HepG2 (cell line): ENCODE measurements at regions of chr1 and their contacts with region 1.

Region 1: GRCh38 chr1:59296358-59297256 is at the start of gene FGGY:
- DNase-seq: peak; percentile 96
- ATAC-seq: peak; percentile 95
- H3K4me3 ChIP-seq: peak within 1 kb of the TSS; percentile 59 to 85 (median 82)
- H3K27ac ChIP-seq: peak within 1 kb of the TSS; percentile 93
- H3K4me1 ChIP-seq: peaks cover 53% of the 10 kb centered on the region
- H3K27me3 ChIP-seq: no peaks in the 10 kb centered on the region; a peak in 1 of 5 replicates
- CTCF ChIP-seq: peak; percentile 25
- EP300 ChIP-seq: no peak
- POLR2A ChIP-seq: peak; percentile 77 to 84
- RAD21 ChIP-seq: no peak; the same call in none of the 2 replicates
- total RNA-seq, gene FGGY: 15.7 and 20.0 TPM in 2 replicates

Region 2: DNA sequence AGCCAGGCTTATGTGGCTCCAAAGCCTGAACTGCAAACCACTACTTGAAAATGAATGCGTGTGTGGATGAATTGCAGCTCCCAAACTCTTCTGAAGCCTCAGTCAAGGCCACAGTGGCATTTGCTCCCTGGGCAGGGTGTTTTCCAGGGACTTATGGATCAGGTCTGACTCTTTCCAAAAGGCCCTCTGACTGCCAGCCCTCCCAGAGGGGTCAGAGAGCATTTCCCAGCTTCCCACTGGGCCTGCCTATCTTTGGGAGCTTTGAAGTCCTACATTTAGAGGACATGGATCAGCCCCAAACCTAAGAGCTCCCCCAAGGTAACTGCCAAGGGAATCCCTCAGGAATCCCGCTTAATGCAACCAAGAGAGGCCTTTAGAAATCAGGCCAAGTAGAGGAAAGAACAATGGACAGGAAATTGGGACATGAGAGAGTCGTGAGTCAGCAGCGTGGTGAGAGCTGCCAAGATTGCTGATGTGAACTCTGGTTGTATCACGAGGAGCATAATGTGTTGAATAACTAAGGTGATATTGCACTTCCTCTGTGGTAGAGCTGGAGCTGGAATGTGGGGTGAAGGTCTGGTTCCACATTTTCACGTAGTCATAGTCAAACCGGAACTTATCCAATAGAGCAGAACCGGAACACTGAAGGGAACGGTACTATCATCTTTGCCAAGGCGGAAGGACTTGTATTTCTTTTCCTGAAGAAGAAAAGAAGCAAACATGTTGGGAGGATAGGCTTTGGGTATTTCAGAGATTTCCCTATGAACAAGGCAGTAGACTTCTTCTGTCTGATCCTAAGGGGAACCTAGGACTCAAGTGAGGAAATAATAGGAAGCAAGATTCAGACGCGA is 413.3 kb before region 1 on chr1:
- CTCF ChIA-PET with region 1: no interaction called
- POLR2A ChIA-PET with region 1: interaction called, 5 read pairs
- in situ Hi-C with region 1: no loop called
- intact Hi-C with region 1: loop called (anchors 10 kb)
- DNase-seq: peak; percentile 93
- ATAC-seq: peak; percentile 50
- H3K4me3 ChIP-seq: 0 out of 6 replicates have a peak overlapping the region, but pooled peaks of 1 of the 3 experiments have one; percentile 18
- H3K27ac ChIP-seq: peak overlapping the region; percentile 77
- H3K4me1 ChIP-seq: peaks cover 76% of the 10 kb centered on the region
- H3K27me3 ChIP-seq: no peaks in the 10 kb centered on the region
- CTCF ChIP-seq: no peak
- EP300 ChIP-seq: peak in 1 of 2 experiments; percentile 78; a peak in 2 of 4 replicates
- POLR2A ChIP-seq: peak in 1 of 2 experiments; percentile 51; a peak in 2 of 4 replicates
- RAD21 ChIP-seq: peak; percentile 31; the same call in 1 of the 2 replicates

Region 3: GRCh38 chr1:59146651-59147358 is 149.8 kb before region 1 on chr1:
- CTCF ChIA-PET with region 1: no interaction called
- POLR2A ChIA-PET with region 1: interaction called, 3 read pairs
- in situ Hi-C with region 1: no loop called
- intact Hi-C with region 1: loop called (anchors 10 kb)
- DNase-seq: peak; percentile 3
- ATAC-seq: peak; percentile 87
- H3K4me3 ChIP-seq: peak overlapping the region; percentile 53 to 75 (median 58)
- H3K27ac ChIP-seq: no peak overlapping the region
- H3K4me1 ChIP-seq: peaks cover 44% of the 10 kb centered on the region
- H3K27me3 ChIP-seq: peaks cover 1 to 22% of the 10 kb centered on the region in 2 experiments; a peak in 3 of 5 replicates
- CTCF ChIP-seq: peak; percentile 59
- EP300 ChIP-seq: no peak
- POLR2A ChIP-seq: no peak
- RAD21 ChIP-seq: peak; percentile 67

Region 4: GRCh38 chr1:59307591-59307990 is 11.0 kb after region 1 on chr1:
- CTCF ChIA-PET with region 1: no interaction called
- POLR2A ChIA-PET with region 1: interaction called, 14 read pairs
- in situ Hi-C with region 1: no loop called
- intact Hi-C with region 1: no loop called
- DNase-seq: no peak
- ATAC-seq: no peak
- H3K4me3 ChIP-seq: no peak overlapping the region
- H3K27ac ChIP-seq: no peak overlapping the region
- H3K4me1 ChIP-seq: peaks cover 15% of the 10 kb centered on the region
- H3K27me3 ChIP-seq: no peaks in the 10 kb centered on the region
- CTCF ChIP-seq: no peak
- EP300 ChIP-seq: no peak
- POLR2A ChIP-seq: no peak
- RAD21 ChIP-seq: no peak

Region 5: GRCh38 chr1:59549903-59550302 is 253.3 kb after region 1 on chr1:
- CTCF ChIA-PET with region 1: no interaction called
- POLR2A ChIA-PET with region 1: interaction called, 4 read pairs
- in situ Hi-C with region 1: loop called (anchors 10 kb)
- intact Hi-C with region 1: no loop called
- DNase-seq: peak; percentile 50
- ATAC-seq: no peak
- H3K4me3 ChIP-seq: no peak overlapping the region
- H3K27ac ChIP-seq: peak overlapping the region; percentile 39
- H3K4me1 ChIP-seq: peaks cover 50% of the 10 kb centered on the region
- H3K27me3 ChIP-seq: no peaks in the 10 kb centered on the region
- CTCF ChIP-seq: no peak
- EP300 ChIP-seq: peak in 1 of 2 experiments; percentile 71; a peak in 2 of 4 replicates
- POLR2A ChIP-seq: no peak
- RAD21 ChIP-seq: no peak

Region 6: GRCh38 chr1:59699227-59699847 is 402.7 kb after region 1 on chr1:
- CTCF ChIA-PET with region 1: interaction called, 4 read pairs
- POLR2A ChIA-PET with region 1: interaction called, 3 read pairs
- in situ Hi-C with region 1: loop called (anchors 10 kb)
- intact Hi-C with region 1: loop called (anchors 2 kb)
- DNase-seq: peak; percentile 48
- ATAC-seq: no peak
- H3K4me3 ChIP-seq: no peak overlapping the region
- H3K27ac ChIP-seq: peak overlapping the region; percentile 44
- H3K4me1 ChIP-seq: peaks cover 37% of the 10 kb centered on the region
- H3K27me3 ChIP-seq: no peaks in the 10 kb centered on the region
- CTCF ChIP-seq: peak; percentile 79
- EP300 ChIP-seq: no peak
- POLR2A ChIP-seq: no peak
- RAD21 ChIP-seq: peak; percentile 72